Thyroid gland (tissue), 4 donors: ENCODE measurements at regions of chr19 and their contacts with region 1.

Region 1: DNA sequence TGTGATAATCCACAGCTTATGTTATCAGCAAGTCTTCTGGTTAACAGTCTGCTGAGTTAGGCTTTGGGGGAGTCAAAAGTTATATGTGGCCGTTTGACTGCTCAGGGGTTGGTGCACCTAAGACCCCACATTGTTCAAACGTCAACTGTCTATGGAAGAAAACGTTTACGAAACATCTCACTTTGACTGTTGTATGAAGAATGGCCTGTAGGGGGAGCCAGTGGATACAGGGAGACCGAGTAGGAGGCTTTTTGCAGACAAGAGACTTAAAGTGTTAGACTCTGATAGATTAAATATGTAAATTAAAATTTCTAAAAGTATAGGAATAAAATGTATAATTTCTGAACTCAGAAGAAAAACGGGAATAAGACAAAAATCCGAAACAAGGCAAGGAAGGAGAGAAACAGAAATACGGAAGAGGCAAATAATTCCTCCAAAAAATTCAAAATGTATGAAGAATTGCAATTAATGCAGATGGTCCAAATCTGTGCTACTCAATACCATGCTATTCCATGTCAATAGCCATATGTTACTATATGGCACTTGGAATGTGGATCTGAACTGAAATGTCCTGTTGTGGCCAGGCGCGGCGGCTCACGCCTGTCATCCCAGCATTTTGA is 37.8 kb downstream of the TNFSF14 start:
- DNase-seq: peak; percentile 53 to 60
- H3K4me3 ChIP-seq: no peak overlapping the region
- H3K27ac ChIP-seq: no peak overlapping the region
- H3K4me1 ChIP-seq: peaks cover 0 to 4% of the 10 kb centered on the region in 2 donors
- H3K27me3 ChIP-seq: no peaks in the 10 kb centered on the region
- CTCF ChIP-seq: peak; percentile 65 to 89 (median 74)
- POLR2A ChIP-seq: no peak

Region 2: DNA sequence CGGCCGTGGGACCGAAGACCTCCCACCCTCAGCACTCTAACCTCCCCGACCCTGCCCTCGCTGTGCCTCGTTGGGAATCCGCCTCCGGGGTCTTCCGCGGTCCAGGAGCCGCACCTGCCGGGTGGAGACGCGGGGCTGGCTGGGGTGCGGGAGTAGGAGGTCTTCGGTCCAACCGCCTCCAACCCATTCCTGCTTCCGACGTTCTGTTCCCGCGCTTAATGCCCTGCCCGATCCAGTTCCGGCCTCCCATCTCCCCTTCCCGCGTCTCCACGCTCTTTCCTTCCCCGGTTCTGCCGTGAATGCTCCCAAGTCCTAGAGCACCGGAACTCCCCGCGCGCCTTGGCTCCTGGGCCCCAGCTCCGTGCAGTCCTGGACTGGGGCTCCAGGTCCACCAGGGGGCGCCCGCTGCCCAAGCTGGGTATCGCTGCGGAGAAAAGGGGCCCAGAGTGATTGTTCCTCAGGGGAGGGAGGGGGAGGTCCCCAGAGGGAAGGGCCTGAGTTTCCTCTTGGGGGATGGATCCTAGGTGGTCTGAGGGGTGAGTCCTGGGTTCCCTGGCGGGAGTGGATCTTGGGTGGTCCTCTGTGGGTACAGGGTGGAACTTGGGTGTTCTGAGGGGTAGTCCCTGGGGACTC is 115.3 kb before region 1 on chr19:
- intact Hi-C with region 1: loop called (anchors 5 kb)
- DNase-seq: peak; percentile 83 to 90
- H3K4me3 ChIP-seq: peak overlapping the region in 2 of 3 donors; percentile 21 to 42
- H3K27ac ChIP-seq: peak overlapping the region in 2 of 3 donors; percentile 31 to 53
- H3K4me1 ChIP-seq: peaks cover 0 to 3% of the 10 kb centered on the region in 2 donors
- H3K27me3 ChIP-seq: no peaks in the 10 kb centered on the region
- CTCF ChIP-seq: peak; percentile 76 to 97 (median 88)
- POLR2A ChIP-seq: no peak

Region 3: GRCh38 chr19:6577476-6578125 is 54.5 kb before region 1 on chr19:
- intact Hi-C with region 1: no loop called
- DNase-seq: no peak
- H3K4me3 ChIP-seq: no peak overlapping the region
- H3K27ac ChIP-seq: no peak overlapping the region
- H3K4me1 ChIP-seq: no peaks in the 10 kb centered on the region
- H3K27me3 ChIP-seq: no peaks in the 10 kb centered on the region
- CTCF ChIP-seq: no peak
- POLR2A ChIP-seq: no peak

Region 4: DNA sequence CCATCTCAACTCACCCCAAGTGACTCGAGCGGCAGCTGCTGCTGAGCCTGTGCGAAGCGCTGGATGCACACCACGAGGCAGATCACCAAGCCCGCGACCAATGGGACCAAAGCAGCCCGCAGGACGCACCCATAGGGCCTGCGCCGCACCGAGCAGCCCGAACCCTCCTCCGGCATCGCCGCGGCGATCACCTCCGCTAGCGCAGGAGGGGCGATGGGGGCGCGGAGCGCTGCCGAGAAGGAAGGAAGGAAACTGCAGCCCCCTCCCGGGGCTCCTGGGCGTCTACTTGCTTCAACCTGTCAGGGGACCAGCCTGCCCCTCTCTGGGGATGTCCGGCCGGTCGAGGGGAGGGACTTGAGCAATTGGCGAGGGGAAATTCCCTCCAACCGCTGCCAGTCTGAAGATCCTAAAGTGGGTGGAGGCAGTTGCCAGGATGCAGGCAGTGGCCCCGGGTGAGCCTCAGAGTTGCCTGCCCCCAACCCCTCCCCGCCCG is 41.2 kb before region 1 on chr19 and contains the start of gene CD70:
- intact Hi-C with region 1: no loop called
- DNase-seq: no peak
- H3K4me3 ChIP-seq: no peak within 1 kb of the TSS
- H3K27ac ChIP-seq: no peak within 1 kb of the TSS
- H3K4me1 ChIP-seq: no peaks in the 10 kb centered on the region
- H3K27me3 ChIP-seq: peaks cover 5% of the 10 kb centered on the region
- CTCF ChIP-seq: no peak
- POLR2A ChIP-seq: no peak
- total RNA-seq, gene CD70: 0.73 TPM in 1 of 4 donors, not detected in the others

Region 5: GRCh38 chr19:6737284-6738046 is 105.4 kb after region 1 on chr19 and contains the start of gene GPR108:
- intact Hi-C with region 1: loop called (anchors 5 kb)
- DNase-seq: peak; percentile 100
- H3K4me3 ChIP-seq: peak within 1 kb of the TSS; percentile 64 to 87 (median 82)
- H3K27ac ChIP-seq: peak within 1 kb of the TSS; percentile 90 to 93 (median 93)
- H3K4me1 ChIP-seq: peaks cover 36 to 39% of the 10 kb centered on the region in 2 donors
- H3K27me3 ChIP-seq: no peaks in the 10 kb centered on the region
- CTCF ChIP-seq: no peak
- POLR2A ChIP-seq: peak in 1 of 2 donors; percentile 71
- total RNA-seq, gene GPR108: 87.9 to 152 (median 116) TPM

Region 6: DNA sequence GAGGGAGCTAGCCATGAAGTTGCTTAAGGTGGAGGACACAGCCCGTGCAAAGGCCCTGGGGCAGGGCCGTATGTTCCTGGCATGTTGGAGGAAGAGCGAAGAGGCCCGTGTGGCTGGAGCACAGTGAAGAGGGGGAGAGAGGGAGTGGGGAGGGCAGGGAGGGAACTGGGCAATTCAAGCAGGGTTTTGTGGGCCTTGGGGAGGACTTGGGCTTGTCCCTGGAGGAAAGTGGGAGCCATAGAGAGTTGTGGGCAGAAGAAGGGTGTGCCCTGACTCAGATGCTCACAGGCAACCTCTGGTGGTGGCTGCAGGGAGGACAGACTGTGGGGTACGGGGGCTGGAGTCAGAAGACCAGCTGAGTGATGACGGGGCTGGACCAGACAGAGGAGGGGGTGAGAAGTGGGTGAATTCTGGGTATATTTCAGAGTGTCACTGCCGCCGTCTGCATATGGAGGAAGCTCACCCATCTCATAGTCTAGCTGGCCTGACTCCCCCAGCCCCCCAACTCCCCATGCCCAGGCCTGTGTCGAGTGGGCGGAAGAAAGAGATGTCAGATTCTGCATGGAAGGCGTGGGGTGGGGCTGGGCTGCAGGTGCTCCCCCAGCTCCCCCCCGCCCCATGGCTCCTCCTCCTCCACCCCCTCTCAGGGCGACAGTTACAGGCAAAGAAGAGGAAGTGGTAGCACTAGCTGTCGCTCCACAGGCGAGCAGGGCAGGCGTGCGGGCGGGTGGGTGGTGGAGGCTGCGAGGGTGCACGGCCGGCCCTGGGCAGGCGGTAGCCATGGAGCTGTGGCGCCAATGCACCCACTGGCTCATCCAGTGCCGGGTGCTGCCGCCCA is 140.1 kb after region 1 on chr19 and contains the start of gene VAV1:
- intact Hi-C with region 1: loop called (anchors 10 kb)
- DNase-seq: peak; percentile 17 to 35
- H3K4me3 ChIP-seq: peak within 1 kb of the TSS in 1 of 3 donors; percentile 2
- H3K27ac ChIP-seq: no peak within 1 kb of the TSS
- H3K4me1 ChIP-seq: peaks cover 6 to 7% of the 10 kb centered on the region in 2 donors
- H3K27me3 ChIP-seq: no peaks in the 10 kb centered on the region
- CTCF ChIP-seq: no peak
- POLR2A ChIP-seq: no peak
- total RNA-seq, gene VAV1: 1.7 to 4.3 (median 2.6) TPM

Region 7: GRCh38 chr19:6862673-6863078 is 230.6 kb after region 1 on chr19:
- intact Hi-C with region 1: loop called (anchors 5 kb)
- DNase-seq: peak; percentile 73 to 78
- H3K4me3 ChIP-seq: no peak overlapping the region
- H3K27ac ChIP-seq: no peak overlapping the region
- H3K4me1 ChIP-seq: peaks cover 4 to 5% of the 10 kb centered on the region in 2 donors
- H3K27me3 ChIP-seq: no peaks in the 10 kb centered on the region
- CTCF ChIP-seq: peak; percentile 69 to 84 (median 76)
- POLR2A ChIP-seq: no peak